Activated B cell treated with CpG ODN at 0.5 μM for 24 hours (primary cell): ENCODE measurements at regions of chrX and their contacts with region 1.

Region 1: GRCh38 chrX:64230123-64230970 is at the start of gene ASB12:
- DNase-seq: no peak
- ATAC-seq: no peak
- H3K4me3 Mint-ChIP-seq: no peak within 1 kb of the TSS
- H3K27ac Mint-ChIP-seq: no peak within 1 kb of the TSS
- H3K4me1 Mint-ChIP-seq: no peaks in the 10 kb centered on the region
- H3K27me3 Mint-ChIP-seq: no peaks in the 10 kb centered on the region
- CTCF ChIP-seq: no peak
- total RNA-seq, gene ASB12: 0.18 TPM in 1 of 2 replicates, not detected in the other

Region 2: DNA sequence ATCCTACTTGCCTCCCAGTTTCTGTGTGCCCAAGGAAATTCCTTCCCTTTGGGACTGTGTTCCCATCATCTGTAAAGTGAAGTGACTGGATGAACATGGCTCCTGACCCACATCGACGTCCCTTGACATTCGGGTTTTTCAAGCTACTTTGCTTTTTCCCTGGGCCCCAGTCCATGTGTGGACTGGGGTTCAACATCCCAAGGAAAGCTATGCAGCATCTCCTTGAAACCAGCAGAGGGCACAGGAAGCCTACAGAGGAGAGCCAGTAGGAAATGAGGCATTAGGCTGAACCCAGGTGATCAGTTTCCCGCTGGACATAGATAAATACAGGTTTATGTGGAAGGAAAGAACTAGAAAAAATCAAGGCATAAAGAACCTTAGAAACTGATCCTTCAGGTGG is 300.2 kb before region 1 on chrX:
- CTCF ChIA-PET with region 1: no interaction called
- POLR2A ChIA-PET with region 1: no interaction called
- intact Hi-C with region 1: no loop called
- DNase-seq: no peak
- ATAC-seq: no peak
- H3K4me3 Mint-ChIP-seq: no peak overlapping the region
- H3K27ac Mint-ChIP-seq: no peak overlapping the region
- H3K4me1 Mint-ChIP-seq: no peaks in the 10 kb centered on the region
- H3K27me3 Mint-ChIP-seq: no peaks in the 10 kb centered on the region
- CTCF ChIP-seq: no peak

Region 3: GRCh38 chrX:64152857-64153256 is 77.5 kb before region 1 on chrX:
- CTCF ChIA-PET with region 1: no interaction called
- POLR2A ChIA-PET with region 1: no interaction called
- intact Hi-C with region 1: no loop called
- DNase-seq: no peak
- ATAC-seq: no peak
- H3K4me3 Mint-ChIP-seq: no peak overlapping the region
- H3K27ac Mint-ChIP-seq: no peak overlapping the region
- H3K4me1 Mint-ChIP-seq: no peaks in the 10 kb centered on the region
- H3K27me3 Mint-ChIP-seq: no peaks in the 10 kb centered on the region
- CTCF ChIP-seq: no peak

Region 4: DNA sequence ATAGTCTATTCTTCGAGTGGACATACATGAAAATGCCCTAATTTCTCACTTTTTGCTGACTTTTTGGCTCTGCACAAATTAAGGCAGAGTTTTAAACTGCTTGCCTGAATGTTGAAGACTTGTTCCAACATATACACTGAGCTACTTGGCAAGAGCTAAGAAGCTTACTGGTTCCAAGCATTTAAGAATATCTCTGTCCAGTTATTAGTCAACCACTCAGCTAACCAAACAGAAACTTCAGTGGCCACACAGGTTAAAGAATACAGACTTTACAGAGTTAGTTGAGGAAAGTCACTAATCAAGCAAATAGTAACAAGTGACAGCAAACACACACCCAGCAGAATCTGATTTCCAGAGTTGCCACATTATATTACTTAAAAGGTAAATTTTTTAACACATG is 60.4 kb before region 1 on chrX:
- CTCF ChIA-PET with region 1: no interaction called
- POLR2A ChIA-PET with region 1: no interaction called
- intact Hi-C with region 1: loop called (anchors 10 kb)
- DNase-seq: no peak
- ATAC-seq: no peak
- H3K4me3 Mint-ChIP-seq: no peak overlapping the region
- H3K27ac Mint-ChIP-seq: no peak overlapping the region
- H3K4me1 Mint-ChIP-seq: no peaks in the 10 kb centered on the region
- H3K27me3 Mint-ChIP-seq: no peaks in the 10 kb centered on the region
- CTCF ChIP-seq: no peak

Region 5: DNA sequence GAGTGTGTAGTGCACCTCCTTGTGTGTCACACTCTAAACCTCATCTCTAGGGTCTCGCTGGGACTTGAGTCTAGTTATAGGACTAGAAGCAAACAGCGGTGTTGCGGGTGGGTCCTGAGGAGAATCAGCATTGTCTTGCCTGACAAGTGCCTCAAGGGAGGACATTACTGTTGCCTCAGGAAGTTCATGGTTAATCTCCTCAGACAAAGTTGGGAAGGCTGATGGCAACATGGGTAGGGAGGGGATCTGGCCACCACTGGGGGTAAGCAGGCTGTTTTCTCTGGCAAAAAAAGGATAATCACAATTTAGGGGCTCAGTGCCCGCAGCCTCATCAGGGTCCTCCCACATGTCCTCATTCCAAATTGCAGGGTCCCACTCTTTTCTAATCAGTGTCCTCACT is 12.3 kb before region 1 on chrX:
- CTCF ChIA-PET with region 1: no interaction called
- POLR2A ChIA-PET with region 1: no interaction called
- intact Hi-C with region 1: no loop called
- DNase-seq: no peak
- ATAC-seq: no peak
- H3K4me3 Mint-ChIP-seq: no peak overlapping the region
- H3K27ac Mint-ChIP-seq: no peak overlapping the region
- H3K4me1 Mint-ChIP-seq: peaks cover 4% of the 10 kb centered on the region
- H3K27me3 Mint-ChIP-seq: no peaks in the 10 kb centered on the region
- CTCF ChIP-seq: no peak

Region 6: DNA sequence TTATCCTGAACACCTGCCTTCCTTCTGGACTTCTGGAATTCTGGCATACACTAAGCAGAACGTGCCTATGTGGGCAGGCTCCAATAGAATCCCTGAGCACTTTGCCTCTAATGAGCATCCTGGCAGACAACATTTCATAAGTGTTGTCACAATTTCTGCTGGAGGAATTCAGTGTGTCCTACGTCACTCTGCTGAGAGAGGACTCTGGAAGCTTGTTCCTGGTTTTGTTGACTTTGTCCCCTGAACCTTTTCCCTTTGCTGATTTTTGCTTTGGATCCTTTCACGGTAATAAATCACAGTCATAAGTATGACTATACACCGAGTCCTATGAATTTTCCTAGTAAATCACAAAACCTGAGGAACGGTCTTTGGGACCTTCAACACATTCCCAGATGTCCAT is 121.7 kb after region 1 on chrX:
- CTCF ChIA-PET with region 1: no interaction called
- POLR2A ChIA-PET with region 1: no interaction called
- intact Hi-C with region 1: no loop called
- DNase-seq: no peak
- ATAC-seq: no peak
- H3K4me3 Mint-ChIP-seq: no peak overlapping the region
- H3K27ac Mint-ChIP-seq: no peak overlapping the region
- H3K4me1 Mint-ChIP-seq: no peaks in the 10 kb centered on the region
- H3K27me3 Mint-ChIP-seq: no peaks in the 10 kb centered on the region
- CTCF ChIP-seq: no peak